ENCODE measurements at regions of chr17 and their contacts with region 1.

Region 1: GRCh38 chr17:41864836-41865595 is at the start of gene KLHL11:
- DNase-seq: peak; percentile 93
- H3K4me3 ChIP-seq: peak within 1 kb of the TSS; percentile 78 to 91 (median 80)
- H3K27ac ChIP-seq: peak within 1 kb of the TSS; percentile 88 to 96 (median 93)
- H3K4me1 ChIP-seq: peaks cover 28 to 49% (median 40%) of the 10 kb centered on the region in 4 donors
- H3K27me3 ChIP-seq: no peaks in the 10 kb centered on the region
- CTCF ChIP-seq: peak in 2 of 3 experiments; percentile 8 to 18
- EP300 ChIP-seq: no peak
- POLR2A ChIP-seq: peak; percentile 53
- total RNA-seq, gene KLHL11: 12.4 to 24.2 (median 17.2) TPM

Region 2: GRCh38 chr17:41567317-41567716 is 297.7 kb before region 1 on chr17:
- intact Hi-C with region 1: no loop called
- DNase-seq: no peak
- H3K4me3 ChIP-seq: no peak overlapping the region
- H3K27ac ChIP-seq: no peak overlapping the region
- H3K4me1 ChIP-seq: no peaks in the 10 kb centered on the region
- H3K27me3 ChIP-seq: peaks cover 0 to 28% (median 0%) of the 10 kb centered on the region in 4 donors
- CTCF ChIP-seq: no peak
- EP300 ChIP-seq: no peak
- POLR2A ChIP-seq: no peak

Region 3: GRCh38 chr17:41811549-41812380 is 53.3 kb before region 1 on chr17 and contains the start of gene P3H4:
- intact Hi-C with region 1: loop called (anchors 5 kb)
- DNase-seq: no peak
- H3K4me3 ChIP-seq: peak within 1 kb of the TSS; percentile 70 to 89 (median 80)
- H3K27ac ChIP-seq: peak within 1 kb of the TSS; percentile 71 to 84 (median 82)
- H3K4me1 ChIP-seq: peaks cover 21 to 54% (median 45%) of the 10 kb centered on the region in 4 donors
- H3K27me3 ChIP-seq: no peaks in the 10 kb centered on the region
- CTCF ChIP-seq: peak; percentile 77 to 85 (median 79)
- EP300 ChIP-seq: no peak
- POLR2A ChIP-seq: no peak
- total RNA-seq, gene P3H4: 8.4 to 19.9 (median 14.4) TPM